Psoas muscle (tissue), 8 donors: ENCODE measurements at regions of chr11 and their contacts with region 1.

Region 1: DNA sequence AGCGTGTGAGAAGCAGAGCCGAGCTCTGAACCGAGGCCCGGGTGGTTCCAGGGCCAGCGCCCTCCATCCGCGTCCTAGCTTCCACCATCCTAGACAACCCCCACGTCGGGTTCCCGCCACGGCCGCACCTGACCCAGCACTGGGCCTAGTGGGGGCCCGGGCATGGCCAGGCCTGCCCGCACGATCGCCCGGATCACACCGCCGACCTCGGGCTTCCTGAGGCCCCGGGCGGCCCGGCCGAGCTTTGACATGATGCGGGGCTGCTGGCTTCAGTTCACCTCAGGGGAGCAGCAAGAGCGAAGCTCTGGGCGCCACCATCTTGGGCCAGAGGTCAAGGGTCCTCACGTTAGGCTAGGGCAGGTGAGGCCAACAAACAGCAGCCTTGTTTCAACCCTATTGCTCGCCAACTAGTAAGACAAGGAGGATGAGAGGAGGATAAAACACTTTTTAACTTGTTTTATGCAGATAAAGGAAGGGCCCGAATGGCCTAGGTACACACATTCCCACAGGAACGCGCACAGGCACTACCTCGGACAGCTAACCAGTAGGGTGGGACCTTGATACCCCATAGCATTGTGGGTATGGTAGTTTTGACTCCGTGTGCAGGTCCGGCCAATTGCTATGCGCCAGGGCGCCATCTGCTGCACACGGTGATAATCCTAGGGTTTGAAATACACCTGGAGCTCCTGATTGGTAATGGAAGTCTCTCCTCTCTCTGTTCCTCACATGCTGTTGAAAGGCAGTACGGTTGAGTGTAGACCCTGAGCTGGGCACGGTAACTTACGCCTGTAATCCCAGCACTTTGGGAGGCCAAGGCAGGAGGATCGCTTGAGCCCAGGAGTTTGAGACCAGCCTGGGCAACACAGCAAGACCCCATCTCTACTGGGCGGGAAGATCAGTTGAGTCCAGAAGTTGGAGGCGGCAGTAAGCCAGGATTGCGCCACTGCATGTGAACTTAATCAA is at the start of gene MRPL11:
- DNase-seq: peak; percentile 90 to 94
- ATAC-seq: peak; percentile 100
- H3K4me3 ChIP-seq: peak within 1 kb of the TSS; percentile 97
- H3K27ac ChIP-seq: peak within 1 kb of the TSS; percentile 89
- H3K4me1 ChIP-seq: peaks cover 8% of the 10 kb centered on the region
- H3K27me3 ChIP-seq: no peaks in the 10 kb centered on the region
- CTCF ChIP-seq: peak; percentile 57
- total RNA-seq, gene MRPL11: 37.0 to 57.4 (median 48.7) TPM

Region 2: DNA sequence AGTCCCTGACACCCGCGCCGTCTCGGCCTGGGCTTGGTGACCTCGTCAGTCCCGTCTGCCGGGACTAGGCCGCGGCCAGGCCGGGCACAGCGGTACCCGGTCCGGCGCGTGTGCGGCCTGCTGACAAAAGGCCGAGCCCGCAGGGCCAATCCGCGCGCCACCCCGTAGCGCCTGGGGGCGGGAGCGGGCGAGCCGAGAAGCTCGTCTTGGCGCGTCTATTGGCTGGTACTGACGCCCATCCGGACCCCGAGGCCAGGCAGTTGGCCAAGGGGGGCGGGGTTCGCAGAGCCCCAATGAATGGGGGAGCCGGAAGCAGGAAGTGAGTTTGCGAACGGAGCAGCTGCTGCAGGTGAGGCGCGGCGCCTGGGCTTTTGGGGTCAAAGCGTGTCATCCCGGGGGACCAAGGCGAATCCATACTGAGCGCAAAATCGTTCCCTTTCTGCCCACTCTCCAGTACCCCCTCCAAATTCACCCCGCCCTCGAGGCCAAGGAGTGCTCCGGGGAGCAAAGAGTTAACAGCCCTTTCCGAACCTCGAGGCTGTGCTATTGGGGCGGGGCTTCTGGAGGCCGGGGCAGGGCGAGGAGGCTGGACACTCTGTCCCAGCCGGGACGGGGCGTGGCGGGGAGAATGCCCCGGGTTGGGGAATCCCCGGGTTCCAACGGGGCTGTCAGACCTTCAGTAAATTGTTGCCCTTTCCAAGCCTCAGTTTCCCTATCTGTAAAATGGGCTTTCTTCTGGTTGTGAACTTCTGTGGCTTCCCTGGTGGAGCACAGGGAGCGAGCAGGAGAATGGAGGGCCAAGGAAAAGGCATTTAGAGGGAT is 41.5 kb after region 1 on chr11 and contains the start of gene DPP3:
- intact Hi-C with region 1: loop called in 1 of 2 experiments (anchors 1 kb)
- DNase-seq: peak; percentile 99
- ATAC-seq: peak; percentile 90 to 97 (median 94)
- H3K4me3 ChIP-seq: peak within 1 kb of the TSS; percentile 96
- H3K27ac ChIP-seq: peak within 1 kb of the TSS; percentile 95
- H3K4me1 ChIP-seq: peaks cover 24% of the 10 kb centered on the region
- H3K27me3 ChIP-seq: no peaks in the 10 kb centered on the region
- CTCF ChIP-seq: no peak
- total RNA-seq, gene DPP3: 24.0 to 44.4 (median 29.8) TPM

Region 3: GRCh38 chr11:66659763-66660162 is 221.0 kb after region 1 on chr11:
- intact Hi-C with region 1: no loop called
- DNase-seq: no peak
- ATAC-seq: no peak
- H3K4me3 ChIP-seq: no peak overlapping the region
- H3K27ac ChIP-seq: no peak overlapping the region
- H3K4me1 ChIP-seq: no peaks in the 10 kb centered on the region
- H3K27me3 ChIP-seq: no peaks in the 10 kb centered on the region
- CTCF ChIP-seq: no peak

Region 4: DNA sequence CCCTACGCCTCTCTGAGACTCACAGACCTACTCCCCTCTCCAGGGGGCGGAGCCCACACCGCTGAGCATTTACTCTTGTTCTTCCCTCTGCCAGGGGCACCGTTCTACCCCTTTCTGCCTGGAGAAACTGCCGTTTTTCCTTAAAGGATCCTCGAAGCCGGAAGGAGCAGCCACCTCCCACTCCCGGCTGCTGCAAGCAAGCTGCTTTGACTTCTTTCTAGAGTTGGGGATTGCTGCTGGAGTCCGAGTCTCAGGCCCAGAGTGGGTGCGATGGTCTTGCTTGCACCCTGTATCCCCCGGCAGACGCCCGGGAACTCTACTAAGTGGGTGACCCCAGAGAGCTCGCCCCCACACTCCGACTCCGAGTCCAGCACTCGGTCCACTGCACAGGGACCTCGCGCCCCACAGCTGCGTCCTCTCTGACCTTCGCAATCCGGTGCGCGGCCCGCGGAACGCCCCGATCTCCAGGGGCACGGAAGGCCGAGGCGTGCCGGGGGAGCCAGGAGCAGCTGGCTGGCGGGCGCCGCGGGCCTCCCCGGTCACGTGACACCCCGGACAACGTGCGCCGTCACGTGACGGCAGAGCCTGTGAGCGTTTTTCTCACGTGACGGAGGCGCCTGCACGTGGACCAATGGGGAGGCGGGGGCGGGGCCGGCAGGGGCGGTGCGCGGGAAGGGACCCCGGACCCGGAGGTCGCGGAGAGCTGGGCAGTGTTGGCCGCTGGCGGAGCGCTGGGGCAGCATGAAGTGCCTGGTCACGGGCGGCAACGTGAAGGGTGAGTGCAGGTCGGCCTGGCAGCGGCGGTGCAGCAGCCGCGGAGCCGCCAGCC is 952.7 kb after region 1 on chr11 and contains the start of gene RAD9A:
- intact Hi-C with region 1: no loop called
- DNase-seq: peak; percentile 96 to 98
- ATAC-seq: peak; percentile 83 to 94 (median 88)
- H3K4me3 ChIP-seq: peak within 1 kb of the TSS; percentile 96
- H3K27ac ChIP-seq: peak within 1 kb of the TSS; percentile 96
- H3K4me1 ChIP-seq: peaks cover 12% of the 10 kb centered on the region
- H3K27me3 ChIP-seq: no peaks in the 10 kb centered on the region
- CTCF ChIP-seq: no peak
- total RNA-seq, gene RAD9A: 1.8 to 6.7 (median 5.8) TPM